ENCODE measurements at regions of chr11 and their contacts with region 1.

Region 1: DNA sequence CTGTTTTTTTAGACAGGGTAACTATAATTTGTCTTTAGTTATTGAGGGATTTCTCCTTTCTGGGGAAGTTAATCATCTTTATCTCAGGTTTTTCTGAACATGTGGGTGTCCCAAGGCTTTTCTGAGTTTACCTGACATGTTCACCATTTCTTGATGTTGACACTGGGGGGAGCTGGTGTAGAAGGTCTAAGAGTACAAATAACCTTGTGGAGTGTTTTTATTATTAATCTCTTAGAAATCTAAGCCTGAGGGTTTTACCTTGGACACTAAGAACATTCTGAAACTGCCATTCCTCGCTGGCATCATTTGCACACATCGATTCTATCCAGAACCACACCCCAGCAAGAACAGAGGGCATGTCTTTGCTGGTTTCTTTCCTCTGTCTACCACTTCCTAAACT is 15.6 kb upstream of the C11orf91 start:
- DNase-seq: peak in 1 of 2 experiments; percentile 62
- ATAC-seq: peak; percentile 68 to 78; a peak in 5 of 6 replicates
- H3K4me3 ChIP-seq: no peak overlapping the region
- H3K27ac ChIP-seq: peak overlapping the region; percentile 39 to 42; a peak in 3 of 6 replicates
- H3K4me1 ChIP-seq: peaks cover 47% of the 10 kb centered on the region
- CTCF ChIP-seq: peak; percentile 57
- EP300 ChIP-seq: no peak
- POLR2A ChIP-seq: no peak
- RAD21 ChIP-seq: peak; percentile 59 to 65

Region 2: DNA sequence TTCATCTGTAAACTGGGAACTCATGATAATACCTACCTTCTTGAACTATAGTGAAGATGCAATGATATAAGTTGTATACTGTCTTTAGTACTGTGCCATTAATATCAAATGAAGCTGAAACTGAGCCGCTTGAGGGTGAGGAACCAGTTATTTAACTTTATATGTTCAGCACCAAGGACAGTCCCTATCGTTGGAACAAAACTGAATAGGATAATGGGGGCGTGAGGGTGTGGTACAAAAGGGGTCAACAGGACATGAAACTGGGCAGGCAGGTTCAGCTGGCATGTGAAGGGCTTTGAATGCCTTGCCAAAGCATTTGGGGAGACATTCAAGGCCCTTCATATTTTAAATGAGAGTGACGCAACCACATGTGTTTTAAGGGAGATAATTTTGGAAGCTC is 128.2 kb before region 1 on chr11:
- CTCF ChIA-PET with region 1: no interaction called
- POLR2A ChIA-PET with region 1: no interaction called
- DNase-seq: no peak
- ATAC-seq: no peak
- H3K4me3 ChIP-seq: no peak overlapping the region
- H3K27ac ChIP-seq: no peak overlapping the region
- H3K4me1 ChIP-seq: no peaks in the 10 kb centered on the region
- CTCF ChIP-seq: no peak
- EP300 ChIP-seq: no peak
- POLR2A ChIP-seq: no peak
- RAD21 ChIP-seq: no peak

Region 3: DNA sequence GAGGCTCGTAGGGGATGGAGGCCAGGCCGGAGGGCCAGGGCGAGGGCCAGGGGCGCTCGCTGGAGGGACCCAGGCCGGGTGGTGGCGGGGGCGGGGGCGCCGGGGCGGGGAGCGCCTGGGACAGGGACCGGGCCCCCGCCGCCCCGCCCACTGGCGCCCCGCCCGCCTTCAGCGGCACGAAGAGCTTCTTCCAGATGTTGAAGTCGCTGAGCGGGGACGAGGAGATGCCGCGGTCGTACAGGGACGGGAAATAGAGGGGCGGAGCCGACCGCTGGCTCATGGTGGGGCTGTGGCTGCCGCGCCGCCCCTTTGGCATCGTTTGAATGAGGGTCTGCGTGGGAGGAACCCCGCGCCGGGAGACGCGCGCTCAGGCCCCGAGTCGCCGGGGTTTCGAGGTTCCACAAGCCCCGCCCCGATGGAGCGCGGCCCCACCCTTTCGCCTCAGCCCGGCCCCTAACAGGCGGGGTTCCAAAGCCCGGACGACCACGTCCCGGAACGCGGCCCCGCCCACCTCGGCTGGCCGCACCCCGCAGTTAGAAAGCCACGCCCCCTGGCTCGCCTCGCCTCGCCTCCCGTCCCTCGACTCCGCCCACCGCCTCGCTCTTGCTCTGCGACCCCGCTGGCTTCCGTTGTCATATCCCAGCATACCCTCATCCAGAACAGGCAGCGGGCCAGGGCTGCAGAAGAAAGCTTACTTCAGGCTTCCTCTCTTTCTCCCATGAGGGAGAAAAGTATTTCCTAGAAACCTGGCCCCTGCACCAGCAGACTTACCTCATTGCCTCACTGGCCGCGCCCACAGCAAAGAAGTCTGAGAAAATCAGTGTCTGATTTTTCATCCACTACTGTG is 15.6 kb before region 1 on chr11 and contains the start of gene C11orf91:
- CTCF ChIA-PET with region 1: interaction called, 12 read pairs
- POLR2A ChIA-PET with region 1: interaction called, 3 read pairs
- DNase-seq: peak; percentile 70 to 93
- ATAC-seq: peak; percentile 77 to 85
- H3K4me3 ChIP-seq: peak within 1 kb of the TSS; percentile 52
- H3K27ac ChIP-seq: peak within 1 kb of the TSS; percentile 82 to 89
- H3K4me1 ChIP-seq: peaks cover 54% of the 10 kb centered on the region
- CTCF ChIP-seq: no peak
- EP300 ChIP-seq: no peak
- POLR2A ChIP-seq: 0 out of 2 replicates have a peak, but pooled peaks have one; percentile 16
- RAD21 ChIP-seq: no peak
- polyA plus RNA-seq, gene C11orf91: 0.42 TPM in 1 of 2 replicates, not detected in the other

Region 4: DNA sequence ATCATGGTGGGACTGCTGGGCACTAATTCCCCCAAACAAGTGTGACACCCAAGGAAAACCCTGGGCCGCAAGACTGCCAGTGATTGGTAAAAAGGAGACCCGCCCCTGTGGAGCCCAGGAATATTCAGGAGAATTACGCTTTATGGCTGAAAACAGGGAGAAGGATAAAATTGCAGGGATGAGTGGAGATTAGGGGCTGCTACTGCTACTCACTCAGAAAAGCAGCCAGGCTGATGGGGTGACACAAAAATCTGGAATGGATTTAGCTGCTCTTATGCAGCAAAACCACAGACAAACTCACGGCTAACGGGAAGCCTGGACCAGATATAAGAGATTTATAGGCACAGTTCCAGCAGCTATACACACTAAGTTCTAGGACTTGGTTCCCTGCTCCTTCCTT is 62.4 kb after region 1 on chr11:
- CTCF ChIA-PET with region 1: no interaction called
- POLR2A ChIA-PET with region 1: no interaction called
- DNase-seq: no peak
- ATAC-seq: no peak
- H3K4me3 ChIP-seq: no peak overlapping the region
- H3K27ac ChIP-seq: no peak overlapping the region
- H3K4me1 ChIP-seq: peaks cover 16% of the 10 kb centered on the region
- CTCF ChIP-seq: no peak
- EP300 ChIP-seq: no peak
- POLR2A ChIP-seq: no peak
- RAD21 ChIP-seq: no peak

Region 5: GRCh38 chr11:33920838-33921613 is 204.8 kb after region 1 on chr11:
- CTCF ChIA-PET with region 1: no interaction called
- POLR2A ChIA-PET with region 1: no interaction called
- DNase-seq: no peak
- ATAC-seq: no peak
- H3K4me3 ChIP-seq: no peak overlapping the region
- H3K27ac ChIP-seq: no peak overlapping the region
- H3K4me1 ChIP-seq: no peaks in the 10 kb centered on the region
- CTCF ChIP-seq: no peak
- EP300 ChIP-seq: no peak
- POLR2A ChIP-seq: no peak
- RAD21 ChIP-seq: no peak